Panc1 (cell line): ENCODE measurements at regions of chr17 and their contacts with region 1.

Region 1: GRCh38 chr17:57284583-57284982 is 28.3 kb downstream of the MSI2 start:
- DNase-seq: no peak
- ATAC-seq: no peak
- H3K4me3 ChIP-seq: no peak overlapping the region
- H3K27ac ChIP-seq: no peak overlapping the region
- H3K4me1 ChIP-seq: no peaks in the 10 kb centered on the region
- H3K27me3 ChIP-seq: no peaks in the 10 kb centered on the region
- CTCF ChIP-seq: no peak

Region 2: DNA sequence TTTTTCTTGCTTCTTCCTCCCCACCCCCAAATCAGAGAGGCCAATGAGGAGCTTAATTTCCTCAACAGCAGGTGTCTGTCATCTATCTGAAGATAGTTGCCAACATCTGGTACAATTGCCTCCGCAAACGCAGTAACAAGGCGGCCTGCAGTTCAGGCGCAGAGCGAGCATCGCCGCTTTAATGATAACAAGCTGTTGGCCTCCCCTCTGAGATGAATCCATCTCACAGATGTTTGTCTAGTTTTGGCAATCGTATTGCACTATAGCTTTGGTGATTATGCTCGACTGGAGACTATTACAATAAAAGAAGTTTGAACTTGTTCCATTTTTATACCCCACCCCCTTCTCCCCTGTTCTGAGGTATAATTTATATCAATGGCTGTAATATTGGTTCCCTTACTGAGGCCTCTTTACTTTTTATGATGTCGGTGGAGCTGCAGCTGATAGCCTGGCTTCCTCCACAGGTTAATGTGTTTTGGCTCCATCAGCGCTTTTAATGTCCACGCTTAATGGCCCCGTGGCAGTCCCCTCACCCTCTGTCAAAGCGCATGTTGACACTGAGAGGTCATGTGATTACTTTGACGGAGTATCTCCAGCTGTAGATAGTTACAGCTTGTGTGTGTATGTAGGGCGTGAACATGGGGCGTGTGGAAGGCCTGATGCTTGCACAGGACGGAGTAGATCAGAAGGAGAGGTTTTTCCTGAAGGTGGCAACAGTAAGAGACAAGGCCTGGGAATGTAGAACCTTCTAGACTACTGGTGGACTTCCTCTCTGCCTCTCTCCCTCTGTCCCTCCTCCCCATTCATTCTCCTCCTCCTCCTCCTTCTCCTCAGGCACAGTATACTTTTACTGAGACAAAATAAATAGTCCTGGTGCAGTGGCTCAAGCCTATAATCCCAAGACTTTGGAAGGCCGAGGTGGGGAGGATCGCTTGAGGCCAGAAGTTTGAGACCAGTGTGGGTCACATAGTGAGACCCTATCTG is 136.4 kb after region 1 on chr17:
- CTCF ChIA-PET with region 1: no interaction called
- POLR2A ChIA-PET with region 1: interaction called, 11 read pairs
- in situ Hi-C with region 1: no loop called
- intact Hi-C with region 1: no loop called
- DNase-seq: no peak
- ATAC-seq: no peak
- H3K4me3 ChIP-seq: no peak overlapping the region
- H3K27ac ChIP-seq: no peak overlapping the region
- H3K4me1 ChIP-seq: no peaks in the 10 kb centered on the region
- H3K27me3 ChIP-seq: no peaks in the 10 kb centered on the region
- CTCF ChIP-seq: no peak